WTC11 (cell line): ENCODE measurements at regions of chr9 and their contacts with region 1.

Region 1: GRCh38 chr9:35882263-35882848 is 12.2 kb upstream of the OR13J1 start:
- DNase-seq: peak; percentile 87
- ATAC-seq: peak; percentile 88
- H3K4me3 Mint-ChIP-seq: no peak overlapping the region
- H3K27ac Mint-ChIP-seq: no peak overlapping the region
- H3K4me1 Mint-ChIP-seq: no peaks in the 10 kb centered on the region
- H3K27me3 Mint-ChIP-seq: peaks cover 6% of the 10 kb centered on the region
- CTCF ChIP-seq: peak; percentile 87

Region 2: GRCh38 chr9:35756275-35757225 is 125.8 kb before region 1 on chr9:
- CTCF ChIA-PET with region 1: interaction called, 15 read pairs
- POLR2A ChIA-PET with region 1: no interaction called
- DNase-seq: peak; percentile 82
- ATAC-seq: peak; percentile 79
- H3K4me3 Mint-ChIP-seq: peak overlapping the region; percentile 89
- H3K27ac Mint-ChIP-seq: peak overlapping the region; percentile 93
- H3K4me1 Mint-ChIP-seq: peaks cover 26% of the 10 kb centered on the region
- H3K27me3 Mint-ChIP-seq: no peaks in the 10 kb centered on the region
- CTCF ChIP-seq: 0 out of 2 replicates have a peak, but pooled peaks have one; percentile 18

Region 3: DNA sequence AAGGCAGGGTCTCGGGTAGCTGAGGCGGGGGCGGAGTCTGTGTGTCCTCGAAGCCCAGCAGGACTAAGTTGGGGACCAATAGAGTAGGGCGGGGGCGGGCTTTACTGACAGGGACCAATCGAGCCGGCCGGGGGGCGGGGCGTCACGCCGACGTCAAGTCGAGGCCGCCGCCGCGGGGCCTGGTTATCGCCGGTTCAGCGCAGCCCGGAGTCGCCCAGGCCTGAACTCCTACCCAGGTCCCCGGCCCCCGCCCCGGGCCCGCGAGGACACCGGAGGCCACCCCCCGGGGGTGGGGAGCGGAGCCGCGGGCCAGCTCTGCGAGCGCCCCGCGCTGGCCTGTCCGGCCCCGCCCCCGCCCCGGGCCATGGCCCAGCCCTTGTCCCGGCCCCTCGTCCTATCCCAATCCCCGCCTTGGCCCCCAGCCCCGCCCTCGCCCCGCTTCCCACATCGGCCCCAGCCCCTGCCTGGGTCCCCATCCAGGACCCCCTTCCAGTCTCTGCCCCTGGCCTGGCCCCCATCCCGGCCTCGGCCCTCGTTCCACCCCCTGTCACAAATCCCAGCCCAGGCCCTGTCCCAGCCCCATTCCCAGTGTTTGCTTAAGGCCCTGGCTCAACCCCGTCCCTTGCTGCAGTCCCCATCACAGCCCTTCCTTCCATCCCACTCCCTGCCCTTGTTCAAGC is 53.1 kb before region 1 on chr9 and contains the start of gene TMEM8B:
- CTCF ChIA-PET with region 1: interaction called, 72 read pairs
- POLR2A ChIA-PET with region 1: no interaction called
- DNase-seq: peak; percentile 97
- ATAC-seq: peak; percentile 91
- H3K4me3 Mint-ChIP-seq: peak within 1 kb of the TSS; percentile 75
- H3K27ac Mint-ChIP-seq: peak within 1 kb of the TSS; percentile 77
- H3K4me1 Mint-ChIP-seq: peaks cover 21% of the 10 kb centered on the region
- H3K27me3 Mint-ChIP-seq: peaks cover 2% of the 10 kb centered on the region; the same call in 1 of the 2 replicates
- CTCF ChIP-seq: no peak
- total RNA-seq, gene TMEM8B: 9.5 to 10.8 TPM (median 10.2 TPM) in 3 replicates

Region 4: GRCh38 chr9:35844716-35845270 is 37.6 kb before region 1 on chr9:
- CTCF ChIA-PET with region 1: interaction called, 21 read pairs
- POLR2A ChIA-PET with region 1: no interaction called
- DNase-seq: no peak
- ATAC-seq: peak; percentile 17
- H3K4me3 Mint-ChIP-seq: peak overlapping the region; percentile 65
- H3K27ac Mint-ChIP-seq: peak overlapping the region; percentile 25
- H3K4me1 Mint-ChIP-seq: peaks cover 37% of the 10 kb centered on the region
- H3K27me3 Mint-ChIP-seq: peaks cover 36% of the 10 kb centered on the region
- CTCF ChIP-seq: no peak

Region 5: DNA sequence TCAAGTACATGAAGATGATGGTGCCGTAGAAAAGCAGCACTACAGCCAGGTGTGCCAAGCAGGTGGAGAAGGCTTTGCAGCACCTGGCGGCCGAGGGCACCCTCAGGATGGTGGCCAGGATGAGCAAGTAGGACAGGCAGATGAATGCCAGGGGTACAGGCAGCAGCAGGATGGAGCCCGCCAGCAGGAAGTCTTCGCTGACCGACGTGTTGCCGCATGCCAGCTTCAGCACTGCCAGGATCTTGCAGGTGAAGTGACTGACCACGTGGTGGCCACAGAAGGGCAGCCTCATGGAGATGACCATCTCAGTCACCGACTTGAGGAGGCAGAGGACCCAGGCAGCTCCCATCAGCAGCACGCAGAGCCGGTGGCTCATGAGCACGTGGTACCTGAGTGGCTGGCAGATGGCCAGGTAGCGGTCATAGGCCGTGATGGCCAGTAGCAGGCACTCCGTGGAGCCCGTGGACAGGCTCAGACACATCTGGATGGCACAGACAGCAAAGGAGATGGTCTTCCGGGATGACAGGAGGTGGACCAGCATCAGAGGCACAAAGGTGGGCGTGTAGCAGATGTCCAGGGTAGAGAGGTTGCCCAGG is 12.6 kb before region 1 on chr9:
- CTCF ChIA-PET with region 1: interaction called, 22 read pairs
- POLR2A ChIA-PET with region 1: no interaction called
- DNase-seq: no peak
- ATAC-seq: no peak
- H3K4me3 Mint-ChIP-seq: no peak overlapping the region
- H3K27ac Mint-ChIP-seq: no peak overlapping the region
- H3K4me1 Mint-ChIP-seq: peaks cover 11% of the 10 kb centered on the region
- H3K27me3 Mint-ChIP-seq: peaks cover 10% of the 10 kb centered on the region
- CTCF ChIP-seq: no peak

Region 6: GRCh38 chr9:35915681-35916302 is 33.4 kb after region 1 on chr9:
- CTCF ChIA-PET with region 1: interaction called, 14 read pairs
- POLR2A ChIA-PET with region 1: no interaction called
- DNase-seq: no peak
- ATAC-seq: peak; percentile 24; the same call in 1 of the 2 replicates
- H3K4me3 Mint-ChIP-seq: no peak overlapping the region
- H3K27ac Mint-ChIP-seq: no peak overlapping the region
- H3K4me1 Mint-ChIP-seq: peaks cover 12% of the 10 kb centered on the region
- H3K27me3 Mint-ChIP-seq: no peaks in the 10 kb centered on the region
- CTCF ChIP-seq: no peak